OCI-LY7 (cell line): ENCODE measurements at regions of chr4 and their contacts with region 1.

Region 1: DNA sequence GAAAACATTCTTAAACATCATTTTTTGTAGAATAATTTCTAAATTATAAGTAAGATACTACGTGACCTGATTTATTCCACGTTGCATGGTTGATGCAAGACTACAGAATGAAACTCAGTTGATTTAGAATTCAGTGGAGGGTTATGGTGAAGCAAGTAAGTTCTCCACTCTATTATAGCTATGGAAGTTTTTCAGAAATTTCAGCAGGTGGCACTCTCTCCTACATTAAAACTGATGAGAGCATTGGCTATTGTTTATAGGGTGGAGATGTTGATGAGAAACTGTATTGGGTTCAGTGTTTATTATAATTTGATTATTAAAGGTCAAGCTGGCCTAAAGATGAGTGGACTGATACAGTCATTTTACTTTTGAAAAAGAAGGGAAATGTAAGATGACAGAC is 88.0 kb downstream of the FNIP2 start:
- DNase-seq: peak; percentile 48
- H3K4me3 ChIP-seq: no peak overlapping the region
- H3K27ac ChIP-seq: no peak overlapping the region
- H3K4me1 ChIP-seq: no peaks in the 10 kb centered on the region
- CTCF ChIP-seq: peak; percentile 85

Region 2: DNA sequence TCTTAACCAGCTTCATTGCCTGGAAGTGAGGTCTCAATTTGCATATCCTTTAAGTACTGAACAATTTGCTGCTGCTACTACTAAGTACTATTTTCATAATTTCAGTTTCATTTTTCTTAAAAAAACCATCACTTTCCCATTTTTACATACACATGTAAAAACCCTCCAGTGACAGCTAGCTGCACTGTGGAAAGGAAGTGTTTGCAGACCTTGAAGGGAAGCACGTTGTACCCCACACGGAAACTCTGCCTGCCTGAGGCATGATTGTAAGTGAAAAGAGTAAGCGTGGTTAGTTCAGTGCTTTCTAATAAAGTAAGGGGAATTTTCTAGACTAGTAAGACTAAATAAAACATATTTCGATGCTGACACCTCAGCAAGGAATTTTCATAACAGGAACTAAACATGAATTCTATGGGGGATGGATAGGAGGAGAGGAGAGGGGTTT is 349.6 kb after region 1 on chr4:
- CTCF ChIA-PET with region 1: no interaction called
- POLR2A ChIA-PET with region 1: no interaction called
- intact Hi-C with region 1: loop called (anchors 1 kb)
- DNase-seq: no peak
- H3K4me3 ChIP-seq: no peak overlapping the region
- H3K27ac ChIP-seq: no peak overlapping the region
- H3K4me1 ChIP-seq: peaks cover 6% of the 10 kb centered on the region
- CTCF ChIP-seq: no peak

Region 3: GRCh38 chr4:159446266-159446976 is 589.6 kb after region 1 on chr4:
- CTCF ChIA-PET with region 1: no interaction called
- POLR2A ChIA-PET with region 1: no interaction called
- intact Hi-C with region 1: loop called (anchors 1 kb)
- DNase-seq: peak; percentile 50
- H3K4me3 ChIP-seq: no peak overlapping the region
- H3K27ac ChIP-seq: no peak overlapping the region
- H3K4me1 ChIP-seq: no peaks in the 10 kb centered on the region
- CTCF ChIP-seq: peak; percentile 85